ENCODE measurements at regions of chr7 and their contacts with region 1.

Region 1: DNA sequence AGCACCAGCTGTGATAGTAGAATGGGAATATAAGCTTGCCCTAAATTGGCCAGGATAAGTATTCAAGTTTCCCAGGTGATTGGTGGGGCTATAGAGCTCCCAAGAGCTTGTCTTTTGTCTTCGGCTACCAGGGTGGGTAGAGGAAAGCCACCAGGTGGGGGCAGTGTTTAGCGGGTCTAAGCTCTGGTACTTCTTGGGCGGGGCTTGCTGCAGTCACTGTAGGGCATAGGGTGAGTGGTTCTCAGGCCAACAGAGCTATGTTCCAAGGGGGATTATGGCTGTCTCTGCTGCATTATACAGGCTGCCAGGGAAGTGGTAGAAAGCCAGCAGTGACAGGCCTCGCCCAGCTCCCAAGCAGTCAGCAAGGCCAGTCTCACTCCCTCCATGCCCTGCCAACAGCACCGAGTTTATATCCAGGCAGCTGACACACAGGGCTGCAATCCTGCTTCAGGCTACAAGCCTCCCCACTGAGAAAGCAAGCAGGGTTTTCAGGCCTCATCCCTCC is 110.7 kb downstream of the ZNF467 start:
- H3K4me3 Mint-ChIP-seq: no peak overlapping the region
- H3K27ac Mint-ChIP-seq: no peak overlapping the region
- H3K4me1 Mint-ChIP-seq: no peaks in the 10 kb centered on the region
- H3K27me3 Mint-ChIP-seq: peaks cover 35% of the 10 kb centered on the region

Region 2: DNA sequence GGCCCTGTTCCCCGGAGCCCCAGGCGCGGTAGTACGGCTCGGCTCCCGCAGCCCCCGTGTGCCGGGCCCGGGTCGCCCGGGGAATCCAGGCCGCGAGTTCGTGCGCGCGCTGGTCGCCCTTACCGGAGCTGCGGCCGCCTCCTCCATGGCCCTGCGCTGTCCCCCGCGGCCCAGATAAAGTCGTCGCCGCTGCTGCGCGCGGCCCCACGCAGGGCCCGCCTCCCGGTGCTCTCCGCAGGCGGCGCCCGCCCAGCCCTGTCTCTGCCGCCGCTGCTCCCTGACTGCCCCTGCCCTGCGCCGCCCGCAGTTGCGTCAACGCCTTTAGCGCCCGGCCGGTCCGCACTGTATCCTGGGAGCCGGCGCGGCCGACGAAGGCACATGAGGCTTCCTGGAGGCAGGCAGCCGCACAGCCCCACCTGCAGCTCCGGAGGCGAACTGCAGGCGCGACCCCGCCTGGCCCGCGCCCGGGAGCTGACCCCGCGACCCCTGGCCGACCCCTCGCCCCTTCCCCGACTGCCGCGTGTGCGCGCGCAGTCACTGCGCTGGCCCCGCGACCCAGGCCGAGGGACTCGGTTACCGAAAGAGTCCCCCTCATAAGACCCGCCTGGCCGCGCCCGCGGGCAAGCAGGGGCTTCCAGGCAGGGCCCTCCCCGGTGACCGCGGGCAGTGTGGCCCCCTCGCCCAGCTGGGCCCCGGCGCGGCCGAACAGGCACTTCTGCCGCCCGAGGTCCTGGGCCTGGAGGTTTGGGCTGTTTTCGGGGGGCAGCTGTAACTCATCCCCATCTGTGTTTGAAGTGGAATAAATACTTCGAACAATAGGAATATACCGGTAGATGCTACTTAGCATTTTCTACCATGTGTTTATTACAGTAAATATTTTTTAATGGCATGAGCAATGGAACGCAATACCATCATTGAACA is 38.0 kb before region 1 on chr7:
- intact Hi-C with region 1: no loop called
- H3K4me3 Mint-ChIP-seq: peak overlapping the region; percentile 95
- H3K27ac Mint-ChIP-seq: peak overlapping the region; percentile 93
- H3K4me1 Mint-ChIP-seq: peaks cover 37% of the 10 kb centered on the region
- H3K27me3 Mint-ChIP-seq: peaks cover 2% of the 10 kb centered on the region

Region 3: GRCh38 chr7:149742075-149742701 is 79.5 kb after region 1 on chr7:
- intact Hi-C with region 1: loop called (anchors 1 kb)
- H3K4me3 Mint-ChIP-seq: peak overlapping the region; percentile 76
- H3K27ac Mint-ChIP-seq: no peak overlapping the region
- H3K4me1 Mint-ChIP-seq: peaks cover 12% of the 10 kb centered on the region
- H3K27me3 Mint-ChIP-seq: peaks cover 47% of the 10 kb centered on the region

Region 4: GRCh38 chr7:149790146-149790548 is 127.5 kb after region 1 on chr7:
- intact Hi-C with region 1: loop called (anchors 1 kb)
- H3K4me3 Mint-ChIP-seq: peak overlapping the region; percentile 33
- H3K27ac Mint-ChIP-seq: no peak overlapping the region
- H3K4me1 Mint-ChIP-seq: peaks cover 6% of the 10 kb centered on the region
- H3K27me3 Mint-ChIP-seq: peaks cover 61% of the 10 kb centered on the region